GM13976 (cell line): ENCODE measurements at regions of chr7 and their contacts with region 1.

Region 1: DNA sequence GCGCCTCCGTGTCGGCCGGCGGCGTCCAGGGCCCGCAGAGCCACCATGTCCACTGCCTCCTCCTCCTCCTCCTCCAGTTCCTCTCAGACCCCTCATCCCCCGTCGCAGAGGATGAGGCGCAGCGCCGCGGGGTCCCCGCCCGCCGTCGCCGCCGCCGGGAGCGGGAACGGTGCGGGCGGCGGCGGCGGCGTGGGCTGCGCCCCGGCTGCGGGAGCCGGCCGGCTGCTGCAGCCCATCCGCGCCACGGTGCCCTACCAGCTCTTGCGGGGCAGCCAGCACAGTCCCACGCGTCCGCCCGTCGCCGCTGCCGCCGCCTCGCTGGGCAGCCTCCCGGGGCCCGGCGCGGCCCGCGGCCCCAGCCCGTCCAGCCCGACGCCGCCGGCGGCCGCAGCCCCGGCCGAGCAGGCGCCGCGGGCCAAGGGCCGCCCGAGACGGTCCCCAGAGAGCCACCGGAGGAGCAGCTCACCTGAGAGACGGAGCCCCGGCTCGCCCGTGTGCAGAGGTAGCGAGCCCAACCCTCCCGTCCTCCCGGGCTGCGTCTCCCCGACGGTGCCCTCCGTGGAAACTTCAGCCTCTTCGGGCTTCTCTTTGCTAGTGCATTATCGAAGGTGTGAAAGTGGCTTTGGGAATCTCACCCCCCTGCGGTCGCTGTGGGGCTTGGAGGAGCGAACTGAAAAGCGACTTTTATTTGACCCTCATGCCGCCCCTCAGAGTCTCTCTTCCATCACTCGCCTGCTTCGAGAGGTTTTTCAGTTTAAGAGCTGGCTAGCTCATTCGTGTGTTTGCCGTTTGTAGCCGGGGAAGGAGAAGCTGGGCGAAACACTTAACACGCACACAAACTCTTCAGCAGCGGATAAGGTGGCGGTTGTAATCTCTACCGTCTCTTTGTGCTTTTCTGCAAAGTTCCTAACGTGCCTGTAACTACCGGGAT is 975 bp downstream of the GLCCI1 start:
- DNase-seq: peak; percentile 30
- CTCF ChIP-seq: no peak

Region 2: DNA sequence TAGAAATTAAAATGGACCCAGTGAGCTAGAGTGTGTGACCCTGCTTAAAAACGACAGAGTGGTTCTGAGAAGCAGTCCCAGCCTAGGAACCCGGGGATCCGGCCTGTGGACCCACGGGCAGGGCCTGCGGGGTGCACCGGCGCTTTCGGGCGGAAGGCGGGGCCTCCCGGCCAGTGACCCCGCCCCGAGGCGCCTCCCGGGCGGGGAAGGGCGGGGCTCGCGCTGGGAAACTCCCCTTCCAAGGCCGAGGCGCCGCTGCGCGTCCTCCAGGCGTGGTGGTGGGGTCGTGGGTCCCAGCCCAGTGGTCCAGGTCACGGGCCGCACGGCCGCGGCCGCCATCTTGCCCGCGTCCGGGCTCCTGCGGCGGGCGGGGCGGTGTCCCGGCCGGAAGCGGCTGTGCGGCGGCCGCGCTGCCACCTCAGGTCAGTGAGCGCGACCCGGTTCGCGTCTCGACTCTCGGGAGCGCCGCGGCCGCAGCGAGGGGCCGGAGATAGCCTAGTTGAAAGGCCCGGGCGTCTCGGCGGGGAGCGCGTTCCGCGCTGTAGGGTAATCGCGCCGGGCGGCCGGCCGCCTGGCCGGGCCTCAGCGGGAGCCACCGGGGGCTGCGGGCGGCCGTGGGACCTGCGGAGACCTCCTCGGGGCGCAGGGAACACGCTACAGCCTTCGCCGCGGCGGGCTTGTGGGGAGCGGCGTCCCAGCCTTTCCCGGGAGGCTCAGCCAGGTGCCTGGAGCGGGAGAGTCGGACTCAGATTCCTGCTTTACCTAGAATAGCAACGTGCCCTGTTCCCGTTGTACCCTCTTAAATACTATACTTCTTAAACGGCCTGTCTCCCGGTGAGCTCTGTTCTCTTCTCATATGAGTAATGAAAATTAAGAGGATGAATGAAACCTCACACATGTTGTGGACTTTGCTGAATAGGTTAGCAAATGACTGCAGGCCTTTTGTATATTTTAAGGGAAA is 402.6 kb before region 1 on chr7 and contains the start of gene MIOS:
- in situ Hi-C with region 1: no loop called
- DNase-seq: peak; percentile 96
- CTCF ChIP-seq: no peak

Region 3: GRCh38 chr7:8125680-8126444 is 156.3 kb after region 1 on chr7:
- in situ Hi-C with region 1: loop called (anchors 10 kb)
- DNase-seq: peak; percentile 66
- CTCF ChIP-seq: no peak

Region 4: GRCh38 chr7:8149222-8149621 is 179.7 kb after region 1 on chr7:
- in situ Hi-C with region 1: no loop called
- DNase-seq: no peak
- CTCF ChIP-seq: no peak

Region 5: GRCh38 chr7:8189625-8190024 is 220.1 kb after region 1 on chr7:
- in situ Hi-C with region 1: loop called (anchors 10 kb)
- DNase-seq: no peak
- CTCF ChIP-seq: no peak